ENCODE measurements at regions of chr22 and their contacts with region 1.

Region 1: GRCh38 chr22:30262917-30263741 is 3.5 kb downstream of the OSM start:
- DNase-seq: peak; percentile 94
- ATAC-seq: peak; percentile 77
- H3K4me3 Mint-ChIP-seq: no peak overlapping the region
- H3K27ac Mint-ChIP-seq: no peak overlapping the region
- H3K4me1 Mint-ChIP-seq: peaks cover 7% of the 10 kb centered on the region
- H3K27me3 Mint-ChIP-seq: peaks cover 7% of the 10 kb centered on the region
- CTCF ChIP-seq: peak; percentile 99

Region 2: DNA sequence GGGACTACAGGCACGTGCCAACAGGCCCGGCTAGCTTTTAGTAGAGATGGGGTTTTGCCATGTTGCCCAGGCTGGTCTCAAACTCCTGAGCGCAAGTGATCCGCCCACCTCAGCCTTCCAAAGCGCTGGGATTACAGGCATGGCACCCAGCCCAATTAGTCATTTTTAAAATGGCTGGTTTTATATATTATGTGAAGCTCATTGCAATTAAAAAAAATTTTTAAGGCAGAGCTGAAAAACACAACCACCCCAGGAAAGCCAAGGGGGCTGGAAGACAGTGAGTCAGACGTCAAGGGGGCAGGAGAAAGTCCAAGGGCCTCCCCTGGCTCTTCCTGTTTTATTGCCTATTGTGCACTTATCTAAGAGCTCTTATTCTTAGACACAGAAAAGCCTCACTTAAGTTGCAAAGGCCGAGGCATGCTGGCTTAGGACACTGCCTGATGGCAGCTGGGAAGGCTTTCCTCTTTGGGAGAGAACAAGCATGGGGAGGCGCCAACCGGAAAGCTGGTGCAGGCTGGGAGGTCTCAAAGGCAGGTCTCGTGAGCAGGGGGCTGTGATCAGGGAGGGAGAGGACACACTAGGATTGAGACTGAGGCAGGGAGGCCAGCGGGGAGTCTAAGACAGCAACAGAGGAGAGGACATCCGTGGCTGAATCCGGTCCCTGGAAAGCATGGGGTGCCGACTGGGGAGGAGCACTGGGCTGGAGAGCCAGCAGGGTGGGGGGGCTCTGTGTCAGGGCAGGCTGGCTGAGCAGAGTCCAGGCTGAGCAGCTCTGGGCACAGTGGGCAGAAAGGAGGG is 14.6 kb after region 1 on chr22:
- CTCF ChIA-PET with region 1: interaction called, 25 read pairs
- POLR2A ChIA-PET with region 1: no interaction called
- DNase-seq: no peak
- ATAC-seq: no peak
- H3K4me3 Mint-ChIP-seq: no peak overlapping the region
- H3K27ac Mint-ChIP-seq: no peak overlapping the region
- H3K4me1 Mint-ChIP-seq: peaks cover 8% of the 10 kb centered on the region
- H3K27me3 Mint-ChIP-seq: no peaks in the 10 kb centered on the region; the same call in 1 of the 2 replicates
- CTCF ChIP-seq: no peak

Region 3: GRCh38 chr22:30304611-30305270 is 41.6 kb after region 1 on chr22:
- CTCF ChIA-PET with region 1: no interaction called
- POLR2A ChIA-PET with region 1: no interaction called
- DNase-seq: no peak
- ATAC-seq: no peak
- H3K4me3 Mint-ChIP-seq: no peak overlapping the region
- H3K27ac Mint-ChIP-seq: no peak overlapping the region
- H3K4me1 Mint-ChIP-seq: no peaks in the 10 kb centered on the region
- H3K27me3 Mint-ChIP-seq: no peaks in the 10 kb centered on the region
- CTCF ChIP-seq: no peak

Region 4: DNA sequence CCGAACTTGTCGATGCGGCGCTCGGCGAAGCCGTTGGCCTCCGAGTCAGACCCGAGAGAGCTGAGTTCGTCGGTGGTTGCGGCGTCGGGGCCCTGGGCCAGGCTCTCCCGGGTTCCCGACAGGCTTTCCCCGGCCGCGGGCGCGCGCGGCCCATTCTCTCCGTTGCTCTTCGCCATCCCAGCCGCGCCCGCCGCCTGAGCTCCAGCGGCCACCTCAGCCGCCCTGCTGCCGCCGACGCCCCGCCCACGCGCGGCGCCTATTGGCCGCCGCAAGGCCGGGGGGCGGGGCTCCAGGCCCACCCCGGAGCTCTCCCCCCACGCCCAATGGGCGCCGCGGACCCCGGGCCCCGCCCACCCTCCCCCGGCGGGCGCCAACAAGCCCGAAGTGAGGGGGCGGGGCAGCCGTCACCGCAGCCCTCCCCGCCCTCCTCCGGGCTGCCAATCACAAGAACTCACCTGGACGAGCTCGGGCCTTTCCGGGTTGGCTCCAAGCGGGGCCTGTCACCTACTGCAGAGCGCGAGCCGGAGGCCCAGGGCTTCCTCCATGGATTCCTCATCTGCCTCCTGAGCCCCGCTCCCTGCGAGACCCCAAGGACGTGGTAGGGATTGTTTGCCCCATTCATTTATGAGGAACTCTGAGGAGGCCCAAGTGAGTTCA is 63.7 kb after region 1 on chr22 and contains the start of gene TBC1D10A:
- CTCF ChIA-PET with region 1: interaction called, 17 read pairs
- POLR2A ChIA-PET with region 1: no interaction called
- DNase-seq: peak; percentile 95
- ATAC-seq: peak; percentile 93
- H3K4me3 Mint-ChIP-seq: peak within 1 kb of the TSS; percentile 75
- H3K27ac Mint-ChIP-seq: peak within 1 kb of the TSS; percentile 89
- H3K4me1 Mint-ChIP-seq: peaks cover 28% of the 10 kb centered on the region
- H3K27me3 Mint-ChIP-seq: no peaks in the 10 kb centered on the region
- CTCF ChIP-seq: no peak
- total RNA-seq, gene TBC1D10A: 7.5 to 11.1 TPM (median 9.6 TPM) in 3 replicates

Region 5: DNA sequence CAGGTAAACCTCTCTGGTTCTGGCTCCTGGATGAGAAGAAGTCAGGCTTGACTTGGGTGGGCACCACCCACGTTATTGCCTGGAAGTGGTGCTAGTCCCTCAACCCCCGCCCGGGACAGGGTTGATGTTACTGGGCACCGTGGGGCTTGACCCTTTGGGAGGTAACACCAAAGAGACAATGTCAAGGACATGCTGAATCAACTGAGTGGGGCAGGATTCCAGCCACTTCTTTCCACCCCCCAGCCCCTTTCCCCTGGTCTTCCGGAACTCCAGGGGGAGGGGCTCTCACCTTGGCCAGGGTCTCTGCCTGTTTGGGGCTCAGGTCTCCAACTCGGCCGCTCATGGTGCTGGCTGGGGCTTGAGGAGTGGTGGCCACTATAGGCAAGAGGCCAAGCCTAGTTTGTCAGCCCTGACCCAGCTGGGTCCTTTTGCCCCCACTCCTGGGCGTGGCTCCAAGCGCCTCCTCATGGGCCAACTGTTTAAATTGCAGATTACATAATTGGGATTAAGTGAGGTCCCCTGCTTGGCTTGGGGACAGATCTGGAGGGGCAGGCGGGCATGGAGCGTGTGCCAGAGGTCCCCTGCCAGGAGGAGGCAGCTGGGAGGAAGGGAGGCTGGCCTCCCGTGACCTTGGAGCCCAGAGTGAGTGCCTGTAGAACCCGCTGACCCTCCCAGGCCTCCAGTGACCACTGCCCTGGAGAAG is 208.6 kb after region 1 on chr22 and contains the start of gene SEC14L3:
- CTCF ChIA-PET with region 1: no interaction called
- POLR2A ChIA-PET with region 1: no interaction called
- DNase-seq: no peak
- ATAC-seq: no peak
- H3K4me3 Mint-ChIP-seq: no peak within 1 kb of the TSS
- H3K27ac Mint-ChIP-seq: no peak within 1 kb of the TSS
- H3K4me1 Mint-ChIP-seq: peaks cover 5% of the 10 kb centered on the region
- H3K27me3 Mint-ChIP-seq: no peaks in the 10 kb centered on the region; the same call in 1 of the 2 replicates
- CTCF ChIP-seq: no peak
- total RNA-seq, gene SEC14L3: not detected in 3 replicates

Measured in WTC11 (cell line).